ENCODE measurements at regions of chr10 and their contacts with region 1.

Region 1: GRCh38 chr10:111207500-111207899 is 130.7 kb downstream of the ADRA2A start:
- DNase-seq: peak; percentile 5
- H3K4me3 ChIP-seq: no peak overlapping the region
- H3K27ac ChIP-seq: no peak overlapping the region
- H3K4me1 ChIP-seq: no peaks in the 10 kb centered on the region
- H3K27me3 ChIP-seq: peaks cover 15% of the 10 kb centered on the region
- CTCF ChIP-seq: peak; percentile 37

Region 2: GRCh38 chr10:111109501-111110242 is 97.8 kb before region 1 on chr10:
- CTCF ChIA-PET with region 1: no interaction called
- POLR2A ChIA-PET with region 1: no interaction called
- intact Hi-C with region 1: no loop called
- DNase-seq: no peak
- H3K4me3 ChIP-seq: no peak overlapping the region
- H3K27ac ChIP-seq: no peak overlapping the region
- H3K4me1 ChIP-seq: no peaks in the 10 kb centered on the region
- H3K27me3 ChIP-seq: peaks cover 13% of the 10 kb centered on the region
- CTCF ChIP-seq: no peak

Region 3: DNA sequence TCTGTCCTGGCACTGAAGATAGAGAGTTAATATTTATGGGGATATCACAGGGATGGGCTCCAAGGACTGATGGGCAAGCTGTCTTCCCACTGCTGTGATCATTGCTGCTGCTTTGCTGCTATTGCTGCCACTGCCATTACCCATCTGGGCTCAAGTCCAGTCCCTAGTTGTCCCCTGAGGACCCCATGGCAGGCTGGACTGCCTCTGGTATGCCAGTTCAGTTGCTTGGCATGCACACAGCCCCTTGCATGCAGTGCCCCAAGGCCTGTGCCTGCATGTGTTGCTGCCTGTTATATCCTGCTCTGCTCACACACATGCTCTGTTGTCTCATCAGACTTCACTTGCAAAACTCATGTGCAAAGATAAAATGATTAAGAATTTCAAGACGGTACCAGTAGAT is 21.1 kb before region 1 on chr10:
- CTCF ChIA-PET with region 1: no interaction called
- POLR2A ChIA-PET with region 1: no interaction called
- intact Hi-C with region 1: loop called (anchors 1 kb)
- DNase-seq: no peak
- H3K4me3 ChIP-seq: no peak overlapping the region
- H3K27ac ChIP-seq: no peak overlapping the region
- H3K4me1 ChIP-seq: no peaks in the 10 kb centered on the region
- H3K27me3 ChIP-seq: peaks cover 29% of the 10 kb centered on the region
- CTCF ChIP-seq: no peak